AG04449 (cell line): ENCODE measurements at regions of chr10 and their contacts with region 1.

Region 1: GRCh38 chr10:103712570-103713498 is 142.5 kb downstream of the SH3PXD2A start:
- DNase-seq: no peak
- H3K4me3 ChIP-seq: no peak overlapping the region
- CTCF ChIP-seq: peak; percentile 79

Region 2: DNA sequence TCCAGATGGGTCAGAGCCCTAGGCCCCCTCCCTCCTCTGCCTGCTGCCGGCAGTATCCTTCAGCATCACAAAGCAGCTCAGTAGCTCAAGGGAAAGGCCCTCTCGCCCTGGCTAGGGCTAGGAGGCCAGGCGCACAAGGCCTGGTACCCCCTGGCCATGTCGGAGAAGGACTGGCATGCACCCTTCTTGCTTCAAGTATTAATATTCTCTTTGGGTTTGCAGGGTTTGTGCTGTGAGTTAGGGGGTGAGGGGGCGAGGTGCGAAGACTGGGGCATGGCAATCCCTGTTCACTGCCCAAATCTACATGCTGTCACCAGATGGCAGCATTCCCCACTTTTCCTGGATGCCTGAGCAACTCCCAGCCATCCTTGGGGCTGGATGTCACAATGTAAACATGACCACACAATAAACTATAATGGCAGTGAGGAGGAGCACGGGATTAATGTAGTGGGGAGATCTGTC is 114.1 kb before region 1 on chr10:
- CTCF ChIA-PET with region 1: interaction called, 11 read pairs
- POLR2A ChIA-PET with region 1: no interaction called
- DNase-seq: peak; percentile 28
- H3K4me3 ChIP-seq: no peak overlapping the region
- CTCF ChIP-seq: peak; percentile 75

Region 3: DNA sequence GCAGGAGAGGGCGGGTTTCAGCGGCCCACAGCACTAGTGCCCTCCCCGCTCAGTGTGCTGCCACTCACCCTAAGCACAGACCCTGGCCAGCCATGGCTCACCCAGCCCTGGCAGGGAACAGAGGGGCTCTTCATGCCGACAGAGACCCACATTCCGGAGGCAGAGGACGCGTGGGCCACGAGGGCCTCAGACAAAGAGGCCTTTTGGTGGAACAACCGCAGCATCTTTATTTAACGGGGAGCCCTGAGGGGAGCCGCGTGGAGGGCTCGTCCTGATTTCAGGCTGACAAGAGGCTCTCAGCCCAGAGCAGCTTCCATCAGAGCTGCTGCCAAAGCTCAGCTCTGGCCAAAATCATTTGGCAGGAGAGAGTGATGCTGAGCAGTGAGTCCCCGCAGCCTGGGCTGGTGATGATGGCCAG is 14.7 kb after region 1 on chr10:
- CTCF ChIA-PET with region 1: interaction called, 38 read pairs
- POLR2A ChIA-PET with region 1: no interaction called
- DNase-seq: no peak
- H3K4me3 ChIP-seq: no peak overlapping the region
- CTCF ChIP-seq: no peak

Region 4: DNA sequence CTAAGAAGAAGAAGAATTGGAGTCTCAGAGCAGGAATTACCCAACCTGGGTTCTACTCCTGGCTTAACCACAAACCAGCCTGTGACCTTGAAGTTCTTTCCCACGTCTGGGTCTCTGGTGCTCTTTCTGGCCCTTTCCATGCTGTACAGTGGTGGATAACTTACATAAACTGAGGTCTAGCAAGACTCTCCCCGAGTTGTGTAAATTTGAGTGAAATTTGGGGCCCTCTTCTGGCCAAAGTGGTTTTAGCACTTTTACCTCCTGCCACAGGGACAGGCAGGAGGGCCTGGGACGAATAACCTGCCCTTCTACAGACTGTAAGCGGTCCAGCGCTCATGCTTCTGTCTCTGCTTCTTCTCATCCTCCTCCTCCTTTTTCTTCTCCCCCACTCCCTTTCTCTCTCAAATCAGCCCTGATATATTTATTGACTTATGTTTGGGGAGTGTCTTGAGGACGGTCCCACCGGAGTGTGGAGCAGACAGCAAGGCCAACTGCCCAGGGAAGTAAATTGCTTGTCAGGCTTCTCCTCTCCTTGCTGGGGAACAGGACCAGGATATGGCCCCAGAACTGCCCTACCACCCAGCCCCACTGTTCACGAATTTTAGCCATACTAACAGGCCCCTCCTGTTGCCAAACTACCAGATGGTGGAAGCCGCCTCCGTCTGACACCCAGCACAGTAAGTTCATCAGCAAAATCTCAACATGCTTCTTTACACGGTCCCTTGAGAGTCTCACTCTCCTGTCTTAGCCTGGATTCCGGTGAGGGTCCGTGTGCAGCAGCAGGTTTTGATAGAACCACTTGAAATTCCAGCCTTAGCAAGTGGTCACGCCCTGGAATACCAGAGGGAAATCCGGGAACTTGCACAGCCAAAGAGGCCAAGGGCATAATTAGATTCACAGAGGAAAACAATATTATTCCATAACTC is 146.6 kb after region 1 on chr10:
- CTCF ChIA-PET with region 1: interaction called, 356 read pairs
- POLR2A ChIA-PET with region 1: no interaction called
- DNase-seq: no peak
- H3K4me3 ChIP-seq: no peak overlapping the region
- CTCF ChIP-seq: peak; percentile 45

Region 5: DNA sequence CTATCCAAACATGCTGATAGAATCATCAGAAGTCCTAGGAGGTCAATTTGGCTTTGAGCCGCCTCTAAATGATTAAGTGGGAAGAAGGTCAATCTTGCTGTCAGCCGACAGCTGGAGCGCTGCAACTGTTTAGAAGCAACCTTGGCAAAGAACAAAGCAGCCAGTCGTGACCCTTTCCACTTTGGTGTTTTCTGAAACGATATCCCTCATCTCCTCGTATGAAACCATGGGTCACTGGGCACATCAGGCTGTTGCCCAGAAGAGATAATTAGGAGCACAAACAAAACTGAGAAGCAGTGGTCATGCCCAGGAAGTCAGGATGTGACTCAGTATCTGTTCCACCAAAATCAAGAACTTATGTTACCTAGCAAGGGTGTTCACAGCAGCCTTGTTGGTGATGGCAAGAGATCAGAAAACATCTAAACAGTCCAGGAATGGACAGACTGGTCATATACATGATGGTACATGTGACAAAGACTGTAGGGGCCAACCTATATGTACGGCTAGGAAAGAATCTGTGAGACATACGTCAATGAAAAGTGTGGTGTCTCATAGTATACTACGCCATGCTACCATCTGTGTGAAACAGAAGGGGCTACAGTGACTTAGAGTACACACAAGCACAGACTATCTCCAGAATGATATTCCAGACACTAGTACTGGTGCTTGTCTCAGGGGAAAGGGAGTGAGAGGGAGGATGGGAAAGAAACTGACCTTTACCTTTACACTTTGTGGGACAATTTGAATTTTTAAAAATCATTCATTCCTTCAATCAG is 182.8 kb after region 1 on chr10:
- CTCF ChIA-PET with region 1: interaction called, 552 read pairs
- POLR2A ChIA-PET with region 1: no interaction called
- DNase-seq: no peak
- H3K4me3 ChIP-seq: no peak overlapping the region
- CTCF ChIP-seq: no peak